Aorta (tissue), 5 donors: ENCODE measurements at regions of chr2 and their contacts with region 1.

Region 1: GRCh38 chr2:85354286-85355072 is at the starts of genes ELMOD3 and RETSAT:
- DNase-seq: peak; percentile 97 to 98
- ATAC-seq: peak; percentile 99
- H3K4me3 ChIP-seq: peak within 1 kb of the TSS; percentile 66 to 75
- H3K27ac ChIP-seq: peak within 1 kb of the TSS in 1 of 2 donors; percentile 9
- H3K4me1 ChIP-seq: peaks cover 0 to 2% of the 10 kb centered on the region in 2 donors
- H3K27me3 ChIP-seq: no peaks in the 10 kb centered on the region
- total RNA-seq, gene ELMOD3: 17.0 to 26.6 TPM
- total RNA-seq, gene RETSAT: 23.8 to 29.5 TPM

Region 2: GRCh38 chr2:85032621-85033020 is 321.9 kb before region 1 on chr2:
- intact Hi-C with region 1: no loop called
- DNase-seq: no peak
- ATAC-seq: no peak
- H3K4me3 ChIP-seq: no peak overlapping the region
- H3K27ac ChIP-seq: no peak overlapping the region
- H3K4me1 ChIP-seq: no peaks in the 10 kb centered on the region
- H3K27me3 ChIP-seq: no peaks in the 10 kb centered on the region

Region 3: GRCh38 chr2:85266146-85267041 is 88.1 kb before region 1 on chr2:
- intact Hi-C with region 1: no loop called
- DNase-seq: peak; percentile 77 to 94
- ATAC-seq: peak; percentile 76
- H3K4me3 ChIP-seq: no peak overlapping the region
- H3K27ac ChIP-seq: peak overlapping the region in 1 of 2 donors; percentile 45
- H3K4me1 ChIP-seq: peaks cover 0 to 9% of the 10 kb centered on the region in 2 donors
- H3K27me3 ChIP-seq: no peaks in the 10 kb centered on the region

Region 4: GRCh38 chr2:85327822-85328617 is 26.5 kb before region 1 on chr2 and contains the start of gene TGOLN2:
- intact Hi-C with region 1: loop called in 1 of 2 experiments (anchors 2 kb)
- DNase-seq: peak; percentile 96 to 98
- ATAC-seq: peak; percentile 99
- H3K4me3 ChIP-seq: peak within 1 kb of the TSS; percentile 67 to 80
- H3K27ac ChIP-seq: peak within 1 kb of the TSS in 1 of 2 donors; percentile 91
- H3K4me1 ChIP-seq: peaks cover 0 to 2% of the 10 kb centered on the region in 2 donors
- H3K27me3 ChIP-seq: no peaks in the 10 kb centered on the region
- total RNA-seq, gene TGOLN2: 116 to 123 TPM